ENCODE measurements at regions of chr2 and their contacts with region 1.

Region 1: GRCh38 chr2:10302479-10303180 is at the start of gene HPCAL1:
- DNase-seq: peak; percentile 69 to 90 (median 84)
- ATAC-seq: peak; percentile 85
- H3K4me3 ChIP-seq: peak within 1 kb of the TSS; percentile 72
- H3K4me3 Mint-ChIP-seq: peak within 1 kb of the TSS; percentile 89 to 100 (median 99)
- H3K27ac ChIP-seq: peak within 1 kb of the TSS; percentile 78
- H3K27ac Mint-ChIP-seq: peak within 1 kb of the TSS; percentile 85 to 97 (median 94)
- H3K4me1 ChIP-seq: peaks cover 42 to 62% of the 10 kb centered on the region in 2 donors
- H3K4me1 Mint-ChIP-seq: peaks cover 46 to 77% (median 66%) of the 10 kb centered on the region in 7 donors
- H3K27me3 ChIP-seq: no peaks in the 10 kb centered on the region
- H3K27me3 Mint-ChIP-seq: no peaks in the 10 kb centered on the region
- total RNA-seq, gene HPCAL1: 44.9 to 90.5 (median 65.8) TPM

Region 2: DNA sequence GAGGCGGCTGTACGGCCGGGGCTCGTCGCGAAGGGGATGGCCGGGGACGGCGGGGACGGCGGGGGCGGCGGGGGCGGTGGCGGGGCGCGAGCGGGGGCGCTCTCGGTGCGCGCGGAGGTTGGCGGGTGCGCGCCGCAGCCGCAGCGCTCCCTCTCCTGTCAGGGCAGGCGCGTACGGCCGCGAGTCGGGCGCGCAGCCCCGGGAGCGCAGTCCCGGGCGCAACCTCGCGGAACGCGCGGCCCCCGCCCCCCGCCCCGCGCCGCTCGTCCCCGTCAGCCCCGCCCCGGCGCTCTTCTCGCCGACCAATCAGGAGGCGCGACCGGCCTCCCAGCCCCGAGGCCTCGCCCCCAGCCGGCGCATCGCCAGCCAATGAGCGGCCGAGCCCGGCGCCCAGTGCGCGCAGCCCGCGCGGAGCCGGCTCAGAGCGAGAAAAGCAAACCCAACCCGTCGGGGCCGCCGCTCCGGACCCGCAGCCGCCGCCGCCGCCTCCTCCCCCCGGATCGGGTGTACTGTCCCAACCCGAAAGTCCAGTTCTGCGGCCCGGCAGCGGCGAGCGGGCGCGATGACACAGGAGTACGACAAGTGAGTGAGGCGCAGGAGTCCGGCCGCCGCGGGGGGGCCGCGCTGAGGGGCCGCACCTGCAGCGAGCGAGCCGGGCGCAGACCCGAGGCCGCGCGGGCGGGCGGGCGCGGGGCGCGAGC is 351.2 kb before region 1 on chr2 and contains the start of gene GRHL1:
- CTCF ChIA-PET with region 1: no interaction called
- POLR2A ChIA-PET with region 1: no interaction called
- intact Hi-C with region 1: loop called in 1 of 2 experiments (anchors 2 kb)
- DNase-seq: peak; percentile 82 to 95 (median 90)
- ATAC-seq: peak; percentile 97
- H3K4me3 ChIP-seq: peak within 1 kb of the TSS; percentile 57
- H3K4me3 Mint-ChIP-seq: peak within 1 kb of the TSS; percentile 70 to 90 (median 86)
- H3K27ac ChIP-seq: peak within 1 kb of the TSS; percentile 63
- H3K27ac Mint-ChIP-seq: peak within 1 kb of the TSS in 7 of 9 donors; percentile 15 to 77 (median 56)
- H3K4me1 ChIP-seq: no peaks in the 10 kb centered on the region
- H3K4me1 Mint-ChIP-seq: peaks cover 0 to 13% (median 8%) of the 10 kb centered on the region in 7 donors
- H3K27me3 ChIP-seq: no peaks in the 10 kb centered on the region
- H3K27me3 Mint-ChIP-seq: peaks cover 19 to 77% (median 39%) of the 10 kb centered on the region in 5 donors
- total RNA-seq, gene GRHL1: 0.19 to 1.3 (median 0.56) TPM

Region 3: DNA sequence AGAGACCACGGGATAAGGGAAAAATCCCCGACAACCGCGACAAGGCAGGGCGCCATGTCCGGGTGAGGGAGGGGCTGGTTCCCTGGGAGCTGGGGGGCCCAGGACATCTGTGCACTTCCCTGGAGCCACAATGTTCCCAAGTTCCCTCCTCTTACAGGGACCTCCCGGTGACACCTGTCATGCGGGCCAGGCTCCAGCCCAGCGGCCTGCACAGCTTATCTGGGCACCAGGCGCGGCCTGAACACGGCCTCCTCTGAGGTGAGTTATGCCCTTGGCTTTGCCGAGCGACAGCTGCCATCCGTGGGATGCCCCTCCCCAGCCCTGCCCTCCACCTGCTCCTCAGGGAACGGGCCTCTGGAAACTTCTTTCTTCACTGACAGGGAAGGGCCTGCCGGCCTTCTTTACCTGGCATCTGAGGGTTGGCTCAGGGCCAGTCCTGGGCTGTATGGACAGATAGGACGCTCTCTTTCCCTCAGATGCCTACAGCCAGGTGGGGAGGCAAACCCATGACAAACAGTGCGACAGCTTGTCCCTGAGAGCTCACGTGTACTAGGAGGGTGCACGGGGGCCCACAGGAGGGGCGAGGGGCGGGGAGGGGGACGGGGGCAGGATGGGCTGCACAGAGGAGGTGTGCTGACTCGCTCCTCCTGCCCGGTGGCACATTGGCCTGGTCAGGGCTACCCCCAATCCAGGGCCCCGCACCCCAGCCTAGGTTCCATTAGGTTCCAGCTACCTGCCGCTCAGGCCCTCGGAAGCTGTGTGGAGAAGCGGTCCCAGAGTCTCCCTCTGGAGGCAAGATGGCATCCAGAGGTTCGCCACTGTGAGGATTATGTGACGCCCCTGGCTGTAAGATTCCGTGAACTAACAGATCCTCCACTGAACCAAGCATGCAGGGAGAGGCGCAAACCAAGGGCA is 34.8 kb before region 1 on chr2:
- CTCF ChIA-PET with region 1: interaction called, 25 read pairs
- POLR2A ChIA-PET with region 1: interaction called, 17 read pairs
- intact Hi-C with region 1: loop called (anchors 1 to 2 kb)
- DNase-seq: no peak
- ATAC-seq: no peak
- H3K4me3 ChIP-seq: no peak overlapping the region
- H3K4me3 Mint-ChIP-seq: no peak overlapping the region
- H3K27ac ChIP-seq: no peak overlapping the region
- H3K27ac Mint-ChIP-seq: no peak overlapping the region
- H3K4me1 ChIP-seq: peaks cover 0 to 8% of the 10 kb centered on the region in 2 donors
- H3K4me1 Mint-ChIP-seq: peaks cover 5 to 13% (median 11%) of the 10 kb centered on the region in 7 donors
- H3K27me3 ChIP-seq: no peaks in the 10 kb centered on the region
- H3K27me3 Mint-ChIP-seq: no peaks in the 10 kb centered on the region

Region 4: GRCh38 chr2:10340316-10340985 is 37.8 kb after region 1 on chr2:
- CTCF ChIA-PET with region 1: interaction called, 3 read pairs
- POLR2A ChIA-PET with region 1: interaction called, 10 read pairs
- intact Hi-C with region 1: no loop called
- DNase-seq: no peak
- ATAC-seq: no peak
- H3K4me3 ChIP-seq: no peak overlapping the region
- H3K4me3 Mint-ChIP-seq: peak overlapping the region in 7 of 10 donors; percentile 33 to 76 (median 57)
- H3K27ac ChIP-seq: no peak overlapping the region
- H3K27ac Mint-ChIP-seq: peak overlapping the region in 7 of 9 donors; percentile 20 to 76 (median 43)
- H3K4me1 ChIP-seq: peaks cover 10 to 47% of the 10 kb centered on the region in 2 donors
- H3K4me1 Mint-ChIP-seq: peaks cover 27 to 91% (median 82%) of the 10 kb centered on the region in 7 donors
- H3K27me3 ChIP-seq: no peaks in the 10 kb centered on the region
- H3K27me3 Mint-ChIP-seq: no peaks in the 10 kb centered on the region

Region 5: GRCh38 chr2:10659898-10660568 is 357.4 kb after region 1 on chr2:
- CTCF ChIA-PET with region 1: no interaction called
- POLR2A ChIA-PET with region 1: no interaction called
- intact Hi-C with region 1: loop called in 1 of 2 experiments (anchors 10 kb)
- DNase-seq: peak in 2 of 9 donors; percentile 10 to 42
- ATAC-seq: no peak
- H3K4me3 ChIP-seq: no peak overlapping the region
- H3K4me3 Mint-ChIP-seq: no peak overlapping the region
- H3K27ac ChIP-seq: no peak overlapping the region
- H3K27ac Mint-ChIP-seq: no peak overlapping the region
- H3K4me1 ChIP-seq: no peaks in the 10 kb centered on the region
- H3K4me1 Mint-ChIP-seq: peaks cover 0 to 15% (median 0%) of the 10 kb centered on the region in 7 donors
- H3K27me3 ChIP-seq: no peaks in the 10 kb centered on the region
- H3K27me3 Mint-ChIP-seq: no peaks in the 10 kb centered on the region

Region 6: DNA sequence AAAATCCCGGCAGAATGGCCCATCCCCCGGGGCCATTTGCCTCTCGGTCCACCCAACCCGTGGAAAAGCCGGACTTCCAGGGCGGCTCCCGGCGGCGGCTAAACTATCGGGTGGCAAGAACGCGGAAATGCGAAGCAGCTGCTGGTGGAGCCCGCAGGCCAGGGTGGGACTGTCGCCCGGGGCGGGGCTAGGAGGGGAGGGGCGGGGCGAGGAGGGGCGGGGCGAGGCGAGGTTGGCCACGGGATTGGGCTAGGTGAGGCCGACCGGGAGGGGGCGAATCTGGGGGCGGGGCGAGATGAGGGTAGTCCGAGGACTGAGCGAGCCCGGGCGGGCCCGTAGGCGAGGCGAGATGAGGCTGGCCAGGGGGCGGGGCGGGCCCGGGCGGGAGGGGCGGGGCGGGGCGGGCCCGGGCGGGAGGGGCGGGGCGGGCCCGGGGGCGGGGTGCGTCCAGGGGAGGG is 852.3 kb after region 1 on chr2:
- CTCF ChIA-PET with region 1: no interaction called
- POLR2A ChIA-PET with region 1: no interaction called
- intact Hi-C with region 1: loop called in 1 of 2 experiments (anchors 2 kb)
- DNase-seq: peak; percentile 92 to 97 (median 96)
- ATAC-seq: peak; percentile 94
- H3K4me3 ChIP-seq: peak overlapping the region; percentile 76
- H3K4me3 Mint-ChIP-seq: peak overlapping the region; percentile 73 to 88 (median 84)
- H3K27ac ChIP-seq: peak overlapping the region; percentile 75
- H3K27ac Mint-ChIP-seq: peak overlapping the region; percentile 44 to 94 (median 90)
- H3K4me1 ChIP-seq: peaks cover 10 to 15% of the 10 kb centered on the region in 2 donors
- H3K4me1 Mint-ChIP-seq: peaks cover 10 to 22% (median 18%) of the 10 kb centered on the region in 7 donors
- H3K27me3 ChIP-seq: no peaks in the 10 kb centered on the region
- H3K27me3 Mint-ChIP-seq: peaks cover 0 to 10% (median 0%) of the 10 kb centered on the region in 5 donors

Measured in naive thymus-derived CD4-positive, alpha-beta T cell (primary cell).